ENCODE measurements at regions of chr6 and their contacts with region 1.

Region 1: DNA sequence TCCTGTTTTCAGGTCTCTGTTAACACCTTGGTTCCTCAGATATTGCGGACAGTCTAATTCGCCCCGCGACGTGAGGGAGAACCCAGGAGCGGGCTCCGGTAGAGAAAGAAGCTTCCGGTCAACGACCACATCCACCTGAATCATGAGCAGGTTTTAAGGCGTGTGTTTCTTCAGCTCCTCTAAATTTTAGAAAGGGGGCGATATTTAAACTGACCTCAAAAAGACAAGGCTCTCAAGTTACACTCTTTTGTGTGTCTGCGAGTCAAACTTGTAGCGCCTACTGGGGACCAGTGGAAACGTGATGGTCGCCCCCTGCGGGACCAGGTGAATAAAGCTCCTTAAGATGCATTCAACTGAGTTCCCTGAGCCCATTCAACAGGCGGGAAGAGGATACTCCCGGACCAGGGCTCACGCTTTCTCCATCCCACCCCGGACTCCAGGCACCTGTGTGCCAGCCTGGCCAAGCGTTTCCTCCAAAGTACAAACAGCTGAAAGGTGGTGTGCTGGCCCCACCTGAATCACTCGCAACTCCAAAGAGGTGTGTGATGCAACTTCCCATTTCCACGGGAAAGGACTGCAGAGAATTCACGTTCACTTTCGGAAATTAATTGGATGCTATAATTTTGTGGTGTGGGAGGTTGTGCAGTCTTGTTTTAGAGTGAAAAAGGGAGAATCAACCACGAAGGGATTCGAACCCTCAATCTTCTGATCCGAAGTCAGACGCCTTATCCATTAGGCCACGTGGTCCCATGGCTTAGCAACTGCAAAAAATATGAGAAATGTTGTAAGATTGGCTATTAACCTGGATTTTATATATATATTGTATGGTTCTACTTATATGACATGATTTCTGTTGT is 17.0 kb downstream of the GPX5 start:
- DNase-seq: peak in 13 of 14 experiments; percentile 20 to 81 (median 50)
- ATAC-seq: peak; percentile 71
- H3K4me3 ChIP-seq: peak overlapping the region; percentile 55
- H3K4me3 Mint-ChIP-seq: peak overlapping the region; percentile 94
- H3K27ac ChIP-seq: no peak overlapping the region
- H3K27ac Mint-ChIP-seq: peak overlapping the region; percentile 92
- H3K4me1 ChIP-seq: peaks cover 18% of the 10 kb centered on the region
- H3K4me1 Mint-ChIP-seq: peaks cover 42% of the 10 kb centered on the region
- H3K27me3 ChIP-seq: peaks cover 8 to 18% of the 10 kb centered on the region in 2 experiments
- H3K27me3 Mint-ChIP-seq: peaks cover 61% of the 10 kb centered on the region
- CTCF ChIP-seq: peak; percentile 39

Region 2: GRCh38 chr6:28496099-28496779 is 46.4 kb before region 1 on chr6:
- CTCF ChIA-PET with region 1: no interaction called
- POLR2A ChIA-PET with region 1: no interaction called
- intact Hi-C with region 1: loop called in 1 of 2 experiments (anchors 5 kb)
- DNase-seq: peak in 2 of 14 experiments; percentile 22 to 27
- ATAC-seq: no peak
- H3K4me3 ChIP-seq: no peak overlapping the region
- H3K4me3 Mint-ChIP-seq: no peak overlapping the region
- H3K27ac ChIP-seq: no peak overlapping the region
- H3K27ac Mint-ChIP-seq: no peak overlapping the region
- H3K4me1 ChIP-seq: no peaks in the 10 kb centered on the region
- H3K4me1 Mint-ChIP-seq: no peaks in the 10 kb centered on the region
- H3K27me3 ChIP-seq: peaks cover 7 to 15% of the 10 kb centered on the region in 2 experiments
- H3K27me3 Mint-ChIP-seq: peaks cover 55% of the 10 kb centered on the region
- CTCF ChIP-seq: peak; percentile 47

Region 3: DNA sequence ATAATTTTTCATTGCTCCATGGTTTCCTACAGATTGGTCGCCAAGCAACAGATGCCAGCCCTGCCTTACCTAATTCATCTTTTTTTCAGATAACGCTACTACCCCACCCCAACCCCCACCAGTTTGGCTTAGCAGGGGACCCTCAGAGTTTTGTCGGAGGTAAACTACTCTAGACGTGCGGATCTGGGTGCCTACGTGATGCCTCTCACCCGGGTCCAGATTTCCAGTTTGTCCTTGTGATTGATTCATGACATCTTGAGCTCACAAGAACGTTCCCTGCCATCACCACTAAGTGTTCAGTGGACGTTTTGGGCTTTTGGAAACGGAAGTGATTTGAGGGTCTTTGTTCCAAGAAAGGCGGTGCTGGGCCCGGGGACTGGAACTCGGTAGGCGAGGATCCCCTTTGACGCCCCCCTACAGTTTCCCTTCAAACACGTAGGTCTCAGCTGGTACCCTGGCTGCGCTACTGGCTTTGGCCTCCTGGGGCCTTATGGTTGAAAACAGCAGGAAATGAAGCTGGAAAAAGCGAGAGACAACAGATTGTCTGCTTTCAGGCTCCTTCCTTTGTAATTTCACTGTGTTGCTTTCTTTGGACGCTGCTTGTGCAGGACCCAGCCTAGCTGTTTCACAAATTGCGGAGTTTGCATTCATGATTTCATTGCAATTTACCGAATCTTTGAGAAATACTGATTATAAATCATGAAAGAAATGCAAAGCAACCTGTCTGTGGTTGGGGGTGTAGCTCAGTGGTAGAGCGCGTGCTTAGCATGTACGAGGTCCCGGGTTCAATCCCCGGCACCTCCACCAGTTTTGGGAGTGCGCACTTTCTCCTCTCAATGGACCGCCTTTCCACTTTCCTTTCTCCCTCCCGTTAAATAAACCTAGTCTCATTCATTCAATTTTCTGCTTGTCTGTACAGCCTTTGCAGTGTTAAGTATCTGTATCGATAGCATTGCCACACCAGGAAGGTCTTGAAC is 64.0 kb after region 1 on chr6:
- CTCF ChIA-PET with region 1: no interaction called
- POLR2A ChIA-PET with region 1: no interaction called
- intact Hi-C with region 1: loop called in 1 of 2 experiments (anchors 5 kb)
- DNase-seq: peak in 6 of 14 experiments; percentile 7 to 51 (median 24)
- ATAC-seq: peak; percentile 85
- H3K4me3 ChIP-seq: peak overlapping the region; percentile 18
- H3K4me3 Mint-ChIP-seq: peak overlapping the region; percentile 76
- H3K27ac ChIP-seq: no peak overlapping the region
- H3K27ac Mint-ChIP-seq: peak overlapping the region; percentile 86
- H3K4me1 ChIP-seq: peaks cover 9% of the 10 kb centered on the region
- H3K4me1 Mint-ChIP-seq: peaks cover 18% of the 10 kb centered on the region
- H3K27me3 ChIP-seq: peaks cover 31 to 55% of the 10 kb centered on the region in 2 experiments
- H3K27me3 Mint-ChIP-seq: peaks cover 83% of the 10 kb centered on the region
- CTCF ChIP-seq: no peak

Region 4: DNA sequence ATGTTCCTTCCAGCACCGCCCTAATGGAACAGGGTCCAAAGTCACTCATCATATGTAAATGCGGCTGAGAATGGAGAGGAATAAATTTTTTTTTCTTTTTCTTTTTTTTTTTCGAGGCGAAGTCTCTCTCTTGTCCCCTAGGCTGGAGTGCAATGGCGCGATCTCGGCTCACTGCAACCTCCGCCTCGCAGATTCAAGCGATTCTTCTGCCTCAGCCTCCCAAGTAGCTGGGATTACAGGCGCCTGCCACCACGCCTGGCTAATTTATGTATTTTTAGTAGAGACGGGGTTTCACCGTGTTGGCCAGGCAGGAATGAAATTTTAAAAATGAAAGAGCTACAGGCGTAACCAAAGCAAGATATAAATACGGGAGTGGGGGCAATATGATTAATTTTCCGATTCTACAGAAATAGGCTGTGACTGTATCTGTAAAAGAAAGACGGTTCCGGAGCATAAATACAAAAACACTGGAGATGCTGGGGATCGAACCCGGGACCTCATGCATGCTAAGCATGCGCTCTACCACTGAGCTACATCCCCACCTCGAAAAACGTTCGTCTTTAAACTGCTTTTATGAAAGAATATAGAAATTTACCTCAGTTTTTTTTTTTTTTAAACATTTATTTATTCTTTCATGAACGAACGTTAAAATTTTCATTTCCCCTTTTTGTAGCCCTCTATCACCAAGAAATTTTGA is 115.2 kb after region 1 on chr6:
- CTCF ChIA-PET with region 1: no interaction called
- POLR2A ChIA-PET with region 1: no interaction called
- intact Hi-C with region 1: loop called in 1 of 2 experiments (anchors 5 kb)
- DNase-seq: peak in 9 of 14 experiments; percentile 15 to 60 (median 27)
- ATAC-seq: peak; percentile 68
- H3K4me3 ChIP-seq: peak overlapping the region; percentile 8
- H3K4me3 Mint-ChIP-seq: peak overlapping the region; percentile 93
- H3K27ac ChIP-seq: no peak overlapping the region
- H3K27ac Mint-ChIP-seq: peak overlapping the region; percentile 86
- H3K4me1 ChIP-seq: peaks cover 11% of the 10 kb centered on the region
- H3K4me1 Mint-ChIP-seq: peaks cover 28% of the 10 kb centered on the region
- H3K27me3 ChIP-seq: peaks cover 42 to 61% of the 10 kb centered on the region in 2 experiments
- H3K27me3 Mint-ChIP-seq: peaks cover 74% of the 10 kb centered on the region
- CTCF ChIP-seq: no peak

Region 5: GRCh38 chr6:29395331-29395730 is 852.7 kb after region 1 on chr6 and contains the start of gene OR12D2:
- CTCF ChIA-PET with region 1: no interaction called
- POLR2A ChIA-PET with region 1: no interaction called
- intact Hi-C with region 1: no loop called
- DNase-seq: no peak
- ATAC-seq: no peak
- H3K4me3 ChIP-seq: no peak within 1 kb of the TSS
- H3K4me3 Mint-ChIP-seq: no peak within 1 kb of the TSS
- H3K27ac ChIP-seq: no peak within 1 kb of the TSS
- H3K27ac Mint-ChIP-seq: no peak within 1 kb of the TSS
- H3K4me1 ChIP-seq: no peaks in the 10 kb centered on the region
- H3K4me1 Mint-ChIP-seq: no peaks in the 10 kb centered on the region
- H3K27me3 ChIP-seq: peaks cover 6 to 28% of the 10 kb centered on the region in 2 experiments
- H3K27me3 Mint-ChIP-seq: peaks cover 60% of the 10 kb centered on the region
- CTCF ChIP-seq: no peak
- total RNA-seq, gene OR12D2: not detected

Measured in CD4-positive, alpha-beta T cell (primary cell).